Head of caudate nucleus (tissue), 42 donors: ENCODE measurements at regions of chr15 and their contacts with region 1.

Region 1: DNA sequence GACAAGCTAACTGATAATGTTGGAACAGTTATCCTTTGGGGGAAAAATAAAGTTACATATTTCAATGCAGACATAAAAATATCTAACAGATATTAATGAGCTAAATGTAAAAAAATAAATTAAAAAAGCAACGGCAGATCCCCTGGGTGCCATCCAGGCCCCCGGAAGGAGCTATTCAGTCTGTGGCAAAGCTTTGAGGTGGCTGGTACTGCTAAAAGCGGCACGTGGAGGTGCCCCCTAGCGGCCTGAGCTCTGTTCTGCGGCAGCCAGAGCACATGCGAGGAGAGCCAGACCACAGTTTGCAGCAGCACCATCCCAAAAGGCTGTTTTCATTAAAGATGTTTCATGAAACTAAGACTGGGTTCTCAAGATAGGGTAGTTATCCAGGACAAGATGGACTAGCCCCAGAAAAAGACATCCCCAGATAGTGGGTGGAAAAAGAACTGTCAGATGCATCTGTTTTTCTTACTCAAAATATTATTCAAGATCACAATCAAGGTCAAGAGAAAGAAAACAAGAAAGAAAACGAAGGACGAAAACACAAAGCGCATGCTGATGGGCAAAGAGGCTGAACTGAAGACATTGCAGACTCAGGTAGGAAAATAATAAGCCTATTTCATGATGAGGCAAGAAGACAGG is 18.7 kb downstream of the AP3S2 start:
- DNase-seq: peak; percentile 60 to 92 (median 86)

Region 2: GRCh38 chr15:89760303-89761008 is 114.6 kb before region 1 on chr15:
- intact Hi-C with region 1: loop called (anchors 5 kb)
- DNase-seq: peak; percentile 26 to 93 (median 81)